Activated B cell treated with CpG ODN at 0.5 μM for 24 hours (primary cell): ENCODE measurements at regions of chr3 and their contacts with region 1.

Region 1: DNA sequence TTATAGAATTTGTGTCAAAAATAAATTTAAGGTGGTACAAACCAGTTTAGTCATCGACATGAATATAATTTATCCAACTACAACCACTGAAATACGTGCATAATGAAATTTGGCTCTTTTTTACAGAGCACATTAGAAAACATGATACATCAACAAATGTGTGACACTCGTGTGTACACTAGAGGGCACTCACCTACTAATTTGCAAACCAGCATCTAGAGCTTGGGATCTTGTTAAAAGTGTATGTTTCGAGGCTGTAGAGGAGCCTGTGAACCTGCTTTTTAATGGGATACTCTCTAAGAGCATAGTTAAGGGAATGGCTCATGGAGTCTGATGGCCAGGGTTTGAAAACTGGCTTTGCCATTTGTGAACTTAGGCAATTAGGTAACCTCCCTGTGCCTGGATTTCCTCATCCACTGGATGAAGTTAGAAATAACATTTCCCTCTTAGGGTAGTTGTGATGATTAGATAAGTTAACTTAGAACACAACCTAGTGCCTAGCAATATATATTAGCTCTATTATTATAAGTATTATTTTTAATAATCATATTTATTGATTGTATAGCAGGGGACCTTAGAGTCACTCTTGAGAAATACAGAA is 8.8 kb upstream of the CPOX start:
- DNase-seq: no peak
- ATAC-seq: peak; percentile 40
- H3K4me3 Mint-ChIP-seq: no peak overlapping the region
- H3K27ac Mint-ChIP-seq: no peak overlapping the region
- H3K4me1 Mint-ChIP-seq: peaks cover under 1% of the 10 kb centered on the region
- H3K27me3 Mint-ChIP-seq: peaks cover 9% of the 10 kb centered on the region
- CTCF ChIP-seq: peak; percentile 22

Region 2: GRCh38 chr3:98657457-98657856 is 55.3 kb after region 1 on chr3:
- CTCF ChIA-PET with region 1: no interaction called
- POLR2A ChIA-PET with region 1: no interaction called
- intact Hi-C with region 1: loop called (anchors 5 kb)
- DNase-seq: no peak
- ATAC-seq: no peak
- H3K4me3 Mint-ChIP-seq: no peak overlapping the region
- H3K27ac Mint-ChIP-seq: no peak overlapping the region
- H3K4me1 Mint-ChIP-seq: peaks cover 3% of the 10 kb centered on the region
- H3K27me3 Mint-ChIP-seq: peaks cover 13% of the 10 kb centered on the region
- CTCF ChIP-seq: no peak

Region 3: DNA sequence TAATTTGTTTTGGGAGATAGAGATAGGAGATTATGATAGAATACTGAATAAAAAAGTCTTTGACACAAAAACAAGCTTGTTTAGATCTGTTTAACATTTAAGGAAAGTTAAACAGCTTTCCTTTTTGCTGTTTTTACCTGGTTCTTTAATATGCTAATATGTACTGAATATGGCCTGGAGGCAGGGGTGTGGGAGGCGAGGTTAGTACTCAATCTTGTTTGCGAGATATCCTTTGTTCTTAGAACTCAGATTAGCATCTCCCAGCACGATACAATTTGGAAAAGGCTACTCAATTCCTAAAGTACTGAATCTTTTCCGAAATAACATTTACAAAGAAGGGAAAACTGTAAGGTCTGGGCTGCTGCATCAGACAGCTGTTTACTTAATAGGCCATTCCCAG is 120.2 kb after region 1 on chr3:
- CTCF ChIA-PET with region 1: no interaction called
- POLR2A ChIA-PET with region 1: no interaction called
- intact Hi-C with region 1: no loop called
- DNase-seq: no peak
- ATAC-seq: no peak
- H3K4me3 Mint-ChIP-seq: no peak overlapping the region
- H3K27ac Mint-ChIP-seq: no peak overlapping the region
- H3K4me1 Mint-ChIP-seq: no peaks in the 10 kb centered on the region
- H3K27me3 Mint-ChIP-seq: peaks cover 10% of the 10 kb centered on the region
- CTCF ChIP-seq: no peak